A549 (cell line): ENCODE measurements at regions of chr5 and their contacts with region 1.

Region 1: GRCh38 chr5:131263648-131264450 is at the start of gene CDC42SE2:
- DNase-seq: peak; percentile 70 to 81
- ATAC-seq: peak; percentile 91 to 97
- H3K4me3 ChIP-seq: peak within 1 kb of the TSS; percentile 97
- H3K27ac ChIP-seq: peak within 1 kb of the TSS; percentile 98 to 99
- H3K4me1 ChIP-seq: peaks cover 20% of the 10 kb centered on the region; the same call in 2 of the 3 replicates
- CTCF ChIP-seq: no peak
- EP300 ChIP-seq: no peak
- POLR2A ChIP-seq: peak; percentile 88
- RAD21 ChIP-seq: peak in 1 of 2 experiments; percentile 31; a peak in 1 of 5 replicates
- polyA plus RNA-seq, gene CDC42SE2: 48.7 and 66.4 TPM in 2 replicates

Region 2: GRCh38 chr5:131165119-131165727 is 98.6 kb before region 1 on chr5 and contains the start of gene HINT1:
- CTCF ChIA-PET with region 1: interaction called, 9 read pairs
- POLR2A ChIA-PET with region 1: interaction called, 20 read pairs
- DNase-seq: peak; percentile 93 to 96
- ATAC-seq: peak; percentile 91 to 94
- H3K4me3 ChIP-seq: peak within 1 kb of the TSS; percentile 79
- H3K27ac ChIP-seq: peak within 1 kb of the TSS; percentile 93 to 99
- H3K4me1 ChIP-seq: peaks cover 12% of the 10 kb centered on the region; the same call in 2 of the 3 replicates
- CTCF ChIP-seq: peak; percentile 9; the same call in 1 of the 3 replicates
- EP300 ChIP-seq: no peak
- POLR2A ChIP-seq: peak; percentile 80
- RAD21 ChIP-seq: peak in 1 of 2 experiments; percentile 38; a peak in 2 of 5 replicates
- polyA plus RNA-seq, gene HINT1: 873 and 1,252 TPM in 2 replicates

Region 3: DNA sequence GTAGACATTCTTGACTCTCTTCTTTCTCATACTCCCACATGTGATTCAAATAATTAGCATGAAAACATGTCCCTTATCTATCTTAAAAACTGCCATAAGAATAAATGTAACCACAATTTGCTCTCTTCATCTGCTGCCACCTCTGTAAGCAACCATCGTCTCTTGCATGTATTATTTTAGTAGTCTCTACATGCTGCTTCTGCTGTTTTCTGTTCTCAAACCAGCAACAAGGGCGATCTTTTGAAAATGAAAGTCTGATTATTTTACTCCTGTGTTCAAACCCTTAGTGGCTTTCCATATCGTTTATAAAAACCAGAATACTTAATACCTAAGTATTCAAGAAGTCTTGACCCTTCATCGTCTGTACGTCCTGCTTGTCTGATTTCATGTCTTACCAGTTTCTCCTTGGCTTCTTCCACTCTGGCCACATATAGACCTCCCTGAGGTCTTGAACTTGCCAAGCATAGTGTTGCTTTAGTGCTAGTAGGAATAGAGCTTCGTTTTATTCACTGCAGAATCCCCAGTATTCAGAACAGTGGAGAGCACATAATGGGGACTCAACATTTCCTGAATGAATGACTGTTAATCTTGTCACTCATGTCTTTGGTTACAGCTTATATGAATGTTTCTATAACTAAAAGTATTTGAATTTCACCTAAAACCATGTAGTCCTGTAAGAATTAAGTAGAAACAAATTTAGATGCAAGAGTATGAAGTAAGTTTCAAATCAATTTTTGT is 10.6 kb after region 1 on chr5:
- CTCF ChIA-PET with region 1: interaction called, 5 read pairs
- POLR2A ChIA-PET with region 1: interaction called, 10 read pairs
- DNase-seq: no peak
- ATAC-seq: no peak
- H3K4me3 ChIP-seq: no peak overlapping the region
- H3K27ac ChIP-seq: no peak overlapping the region
- H3K4me1 ChIP-seq: peaks cover 43% of the 10 kb centered on the region
- CTCF ChIP-seq: no peak
- EP300 ChIP-seq: no peak
- POLR2A ChIP-seq: no peak
- RAD21 ChIP-seq: no peak

Region 4: GRCh38 chr5:131285703-131286394 is 22.0 kb after region 1 on chr5:
- CTCF ChIA-PET with region 1: interaction called, 3 read pairs
- POLR2A ChIA-PET with region 1: interaction called, 11 read pairs
- DNase-seq: no peak
- ATAC-seq: peak in 1 of 2 experiments; percentile 31; a peak in 3 of 6 replicates
- H3K4me3 ChIP-seq: no peak overlapping the region
- H3K27ac ChIP-seq: no peak overlapping the region
- H3K4me1 ChIP-seq: peaks cover 30% of the 10 kb centered on the region
- CTCF ChIP-seq: no peak
- EP300 ChIP-seq: no peak
- POLR2A ChIP-seq: no peak
- RAD21 ChIP-seq: no peak

Region 5: DNA sequence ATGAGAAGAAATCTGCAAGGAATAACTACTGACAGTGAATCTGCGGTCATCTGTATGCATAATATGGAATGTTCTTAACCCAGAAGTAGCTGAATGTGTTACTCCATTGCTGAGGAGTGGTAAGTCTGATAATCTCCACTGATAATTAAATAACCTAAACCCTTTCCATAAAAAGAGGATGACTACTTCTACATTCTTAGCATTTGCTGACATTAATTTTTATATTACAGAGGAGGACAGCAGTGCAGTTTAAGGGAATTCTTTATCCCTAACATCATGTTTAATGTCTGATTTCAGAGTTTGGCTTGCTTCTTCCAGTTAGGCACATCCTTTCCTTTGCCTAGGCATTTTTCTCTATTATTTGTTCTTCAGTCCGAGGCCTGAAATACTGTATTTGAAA is 52.2 kb after region 1 on chr5:
- CTCF ChIA-PET with region 1: no interaction called
- POLR2A ChIA-PET with region 1: interaction called, 27 read pairs
- DNase-seq: no peak
- ATAC-seq: no peak
- H3K4me3 ChIP-seq: no peak overlapping the region
- H3K27ac ChIP-seq: no peak overlapping the region
- H3K4me1 ChIP-seq: peaks cover 17% of the 10 kb centered on the region
- CTCF ChIP-seq: no peak
- EP300 ChIP-seq: no peak
- POLR2A ChIP-seq: no peak
- RAD21 ChIP-seq: no peak

Region 6: GRCh38 chr5:131382407-131383395 is 118.9 kb after region 1 on chr5:
- CTCF ChIA-PET with region 1: interaction called, 19 read pairs
- POLR2A ChIA-PET with region 1: interaction called, 3 read pairs
- DNase-seq: peak; percentile 70 to 85
- ATAC-seq: peak; percentile 89 to 90
- H3K4me3 ChIP-seq: no peak overlapping the region
- H3K27ac ChIP-seq: 0 out of 6 replicates have a peak overlapping the region, but pooled peaks of 1 of the 2 experiments have one; percentile 16
- H3K4me1 ChIP-seq: peaks cover 44% of the 10 kb centered on the region
- CTCF ChIP-seq: peak; percentile 60
- EP300 ChIP-seq: no peak
- POLR2A ChIP-seq: no peak
- RAD21 ChIP-seq: peak; percentile 69 to 87